ENCODE measurements at regions of chr3 and their contacts with region 1.

Region 1: GRCh38 chr3:149480325-149481017 is 6.0 kb downstream of the TM4SF4 start:
- DNase-seq: peak; percentile 16
- H3K4me3 Mint-ChIP-seq: no peak overlapping the region
- H3K27ac Mint-ChIP-seq: no peak overlapping the region
- H3K4me1 Mint-ChIP-seq: no peaks in the 10 kb centered on the region
- H3K27me3 Mint-ChIP-seq: peaks cover 2% of the 10 kb centered on the region

Region 2: DNA sequence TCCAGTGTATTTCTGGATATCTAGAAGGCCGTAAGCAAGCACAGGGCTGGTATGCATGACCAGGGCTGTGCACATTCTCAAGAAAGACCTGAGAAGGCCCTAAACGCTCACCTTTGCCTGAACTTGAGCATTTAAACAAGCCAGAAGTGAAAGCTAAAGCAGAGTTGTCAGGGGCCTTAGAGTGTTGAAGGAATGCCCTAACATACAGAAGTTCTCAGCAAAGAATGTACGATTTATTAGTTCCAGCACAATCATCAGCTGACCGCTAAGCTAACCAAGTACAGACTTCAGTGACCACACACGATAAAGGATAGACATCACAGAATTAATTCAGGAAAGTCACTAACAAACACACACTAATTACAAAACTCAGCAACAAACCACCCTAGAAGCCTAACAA is 402.8 kb before region 1 on chr3:
- intact Hi-C with region 1: no loop called
- DNase-seq: no peak
- H3K4me3 Mint-ChIP-seq: no peak overlapping the region
- H3K27ac Mint-ChIP-seq: no peak overlapping the region
- H3K4me1 Mint-ChIP-seq: no peaks in the 10 kb centered on the region
- H3K27me3 Mint-ChIP-seq: no peaks in the 10 kb centered on the region

Region 3: DNA sequence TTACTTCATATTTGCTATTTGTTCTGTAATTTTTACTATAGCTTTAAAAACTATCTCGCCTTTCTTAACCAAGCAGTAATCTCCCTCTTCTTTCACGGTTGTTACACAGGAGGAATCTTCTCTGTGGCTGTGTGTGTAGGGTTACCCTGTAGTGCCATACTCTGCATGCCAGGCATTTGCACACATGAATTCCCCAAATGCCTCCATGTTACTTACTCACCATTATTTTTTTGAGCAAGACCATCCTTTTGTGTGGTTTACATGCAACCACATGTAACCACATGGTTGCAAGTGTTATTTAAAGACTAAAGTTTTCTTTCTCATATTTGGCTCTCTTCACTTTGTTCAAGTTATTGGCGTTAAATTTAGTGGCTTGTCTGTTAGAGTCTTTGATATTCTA is 305.6 kb before region 1 on chr3:
- intact Hi-C with region 1: no loop called
- DNase-seq: peak; percentile 2
- H3K4me3 Mint-ChIP-seq: no peak overlapping the region
- H3K27ac Mint-ChIP-seq: no peak overlapping the region
- H3K4me1 Mint-ChIP-seq: peaks cover 8% of the 10 kb centered on the region
- H3K27me3 Mint-ChIP-seq: no peaks in the 10 kb centered on the region

Region 4: GRCh38 chr3:149352556-149352955 is 127.9 kb before region 1 on chr3:
- intact Hi-C with region 1: loop called (anchors 1 kb)
- DNase-seq: peak; percentile 4
- H3K4me3 Mint-ChIP-seq: no peak overlapping the region
- H3K27ac Mint-ChIP-seq: no peak overlapping the region
- H3K4me1 Mint-ChIP-seq: no peaks in the 10 kb centered on the region
- H3K27me3 Mint-ChIP-seq: peaks cover 33% of the 10 kb centered on the region

Region 5: DNA sequence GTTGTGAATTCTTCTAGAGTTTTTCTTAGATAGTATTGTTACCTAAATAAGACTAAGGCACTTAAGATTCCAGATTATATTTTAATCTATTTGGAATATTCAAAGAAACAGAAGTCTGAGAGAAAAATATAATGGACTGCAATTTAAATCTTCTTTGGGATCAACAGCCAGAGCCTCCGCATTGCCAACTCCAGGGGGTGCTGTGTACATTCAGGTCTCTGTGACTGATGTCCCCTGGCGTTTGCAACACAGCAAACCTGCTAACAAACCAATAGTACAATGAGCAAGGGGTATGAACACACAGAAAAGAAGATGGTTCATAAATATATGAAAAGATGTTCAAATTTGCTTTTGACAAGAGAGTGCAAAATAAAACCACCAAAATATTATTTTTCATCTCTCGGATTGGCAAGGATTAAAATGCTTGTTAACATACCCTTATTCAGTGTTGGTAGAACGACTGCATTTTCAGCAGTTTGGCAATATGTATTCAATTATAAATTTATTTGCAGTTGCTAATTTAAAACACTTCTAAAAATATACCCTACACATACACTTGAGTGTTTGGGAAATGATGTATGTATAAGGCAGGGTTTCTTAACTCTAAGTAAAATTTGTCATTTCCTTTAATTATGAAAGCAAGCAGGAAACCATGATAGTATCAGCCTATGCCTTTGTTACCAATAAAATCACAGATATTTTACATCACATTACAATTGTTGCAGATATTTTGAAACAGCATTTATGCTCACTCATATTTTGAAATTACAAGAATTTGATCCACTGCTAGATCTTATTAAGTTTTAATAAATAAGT is 86.9 kb before region 1 on chr3:
- intact Hi-C with region 1: loop called (anchors 1 kb)
- DNase-seq: peak; percentile 12
- H3K4me3 Mint-ChIP-seq: no peak overlapping the region
- H3K27ac Mint-ChIP-seq: no peak overlapping the region
- H3K4me1 Mint-ChIP-seq: no peaks in the 10 kb centered on the region
- H3K27me3 Mint-ChIP-seq: peaks cover 10% of the 10 kb centered on the region

Region 6: DNA sequence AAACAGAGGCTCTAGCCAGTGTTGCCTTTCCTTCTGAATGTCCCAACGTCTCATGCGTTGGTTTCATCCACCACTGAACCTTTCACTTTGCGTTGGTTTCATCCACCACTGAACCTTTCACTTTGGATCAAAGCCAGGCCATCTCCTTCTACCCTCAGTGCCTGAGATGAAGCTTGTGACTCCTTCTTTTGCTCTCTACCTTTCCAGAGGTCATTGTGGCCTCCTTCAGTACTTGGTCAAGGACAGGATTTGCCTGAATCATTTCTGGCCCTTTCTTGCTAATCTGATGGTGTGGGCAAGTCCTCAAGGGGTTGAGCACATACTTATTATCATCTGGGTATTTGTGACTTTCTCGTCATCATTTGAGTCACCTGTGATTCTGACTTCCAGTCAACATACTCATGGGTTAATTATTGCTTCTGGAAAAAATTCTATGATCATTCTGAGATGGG is 1172.7 kb after region 1 on chr3:
- intact Hi-C with region 1: no loop called
- DNase-seq: no peak
- H3K4me3 Mint-ChIP-seq: no peak overlapping the region
- H3K27ac Mint-ChIP-seq: no peak overlapping the region
- H3K4me1 Mint-ChIP-seq: no peaks in the 10 kb centered on the region
- H3K27me3 Mint-ChIP-seq: peaks cover 7% of the 10 kb centered on the region

Measured in activated T-helper 1 cell treated with anti-CD3 and anti-CD28 coated beads, Interleukin-12 subunit alpha, Interleukin-12 subunit beta, Interleukin-2, Interleukin-4 antibody, amounts not matched to agents 30 ng/mL and 10 ng/mL and 1 ng/mL, durations not matched to agents 14 hours and 24 hours and 36 hours (primary cell).